PC-9 (cell line): ENCODE measurements at regions of chr2 and their contacts with region 1.

Region 1: DNA sequence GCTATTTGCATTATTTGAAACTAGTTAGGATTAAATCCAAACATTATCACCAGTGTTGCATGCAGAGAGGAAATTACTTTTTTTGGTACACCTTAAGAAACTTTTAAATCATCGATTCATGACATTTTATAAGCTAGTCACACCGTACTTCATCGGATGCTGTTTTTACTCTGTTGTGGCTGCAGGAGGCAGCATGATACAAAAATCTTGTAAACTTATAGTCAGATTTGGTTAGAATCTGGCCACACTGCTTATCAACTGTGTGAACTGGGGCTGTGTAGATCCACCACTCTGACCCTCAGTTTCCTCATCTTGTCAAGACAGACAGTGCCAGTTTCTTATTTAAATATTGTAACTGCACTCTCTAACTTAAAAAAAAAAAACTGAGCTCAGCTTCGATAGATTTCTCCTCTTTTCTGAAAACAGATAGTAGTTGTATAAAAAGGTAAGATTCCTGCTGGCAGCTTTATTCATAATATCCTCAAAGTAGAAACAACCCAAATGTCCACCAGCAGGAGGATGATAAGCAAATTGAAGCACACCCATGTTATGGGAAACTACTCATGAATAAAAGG is 77.8 kb downstream of the RAPGEF4 start:
- DNase-seq: peak in 1 of 2 experiments; percentile 17
- H3K4me3 ChIP-seq: no peak overlapping the region
- H3K27ac ChIP-seq: no peak overlapping the region
- H3K4me1 ChIP-seq: no peaks in the 10 kb centered on the region
- H3K27me3 ChIP-seq: no peaks in the 10 kb centered on the region
- CTCF ChIP-seq: peak; percentile 81

Region 2: GRCh38 chr2:172783091-172783898 is 30.1 kb before region 1 on chr2:
- CTCF ChIA-PET with region 1: no interaction called
- POLR2A ChIA-PET with region 1: no interaction called
- intact Hi-C with region 1: no loop called
- DNase-seq: peak; percentile 95 to 100
- H3K4me3 ChIP-seq: no peak overlapping the region
- H3K27ac ChIP-seq: peak overlapping the region; percentile 72
- H3K4me1 ChIP-seq: peaks cover 33% of the 10 kb centered on the region
- H3K27me3 ChIP-seq: no peaks in the 10 kb centered on the region
- CTCF ChIP-seq: no peak; the same call in 1 of the 2 replicates

Region 3: GRCh38 chr2:172864182-172864581 is 50.8 kb after region 1 on chr2:
- CTCF ChIA-PET with region 1: interaction called, 4 read pairs
- POLR2A ChIA-PET with region 1: interaction called, 11 read pairs
- intact Hi-C with region 1: loop called (anchors 2 kb)
- DNase-seq: peak; percentile 50 to 53
- H3K4me3 ChIP-seq: no peak overlapping the region
- H3K27ac ChIP-seq: no peak overlapping the region
- H3K4me1 ChIP-seq: no peaks in the 10 kb centered on the region
- H3K27me3 ChIP-seq: no peaks in the 10 kb centered on the region
- CTCF ChIP-seq: peak; percentile 79